ENCODE measurements at regions of chr1 and their contacts with region 1.

Region 1: DNA sequence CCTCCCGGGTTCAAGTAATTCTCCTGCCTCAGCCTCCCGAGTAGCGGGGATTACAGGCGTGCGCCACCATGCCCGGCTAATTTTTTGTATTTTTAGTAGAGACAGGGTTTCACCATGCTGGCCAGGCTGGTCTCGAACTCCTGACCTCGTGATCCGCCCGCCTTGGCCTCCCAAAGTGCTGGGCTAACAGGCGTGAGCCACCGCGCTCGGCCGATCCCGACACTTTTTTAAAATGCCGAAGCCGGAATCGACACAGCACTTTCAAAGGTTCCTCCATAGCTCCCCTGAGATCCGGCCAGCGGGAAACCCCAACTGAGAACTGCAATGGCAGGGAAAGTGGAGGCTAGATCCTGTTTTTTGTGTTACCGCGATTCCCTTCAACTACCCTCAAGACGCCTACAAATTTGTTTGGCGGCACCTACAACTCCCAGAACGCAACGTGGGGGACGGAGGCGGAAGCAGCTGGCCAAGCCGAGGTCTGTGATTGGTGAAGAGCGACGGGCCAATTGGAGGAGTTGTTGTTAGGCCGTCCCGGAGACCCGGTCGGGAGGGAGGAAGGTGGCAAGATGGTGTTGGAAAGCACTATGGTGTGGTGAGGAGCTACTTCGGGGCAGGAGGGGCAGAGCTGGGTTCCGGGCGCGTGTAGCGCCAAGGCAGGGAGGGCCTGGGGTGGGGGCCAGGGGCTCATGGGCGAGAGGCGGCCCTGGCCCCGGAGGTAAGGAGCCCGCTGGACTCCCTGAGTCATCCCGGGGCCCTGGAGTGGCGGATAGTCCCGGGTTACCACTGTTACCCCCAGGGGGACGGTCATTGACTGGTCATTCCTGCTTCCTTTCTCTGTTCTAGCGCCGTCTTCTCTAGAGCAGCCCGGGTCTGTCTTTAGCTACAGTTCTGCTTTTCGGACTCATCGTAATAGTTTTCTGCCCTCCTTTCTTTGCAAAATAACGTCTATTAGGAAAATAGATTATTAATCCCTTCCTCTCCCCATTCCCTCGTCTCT is at the start of gene PSMD4:
- DNase-seq: peak; percentile 88 to 98 (median 92)
- ATAC-seq: peak; percentile 93
- H3K4me3 ChIP-seq: peak within 1 kb of the TSS; percentile 87
- H3K4me3 Mint-ChIP-seq: peak within 1 kb of the TSS; percentile 98
- H3K27ac ChIP-seq: peak within 1 kb of the TSS; percentile 55 to 67
- H3K27ac Mint-ChIP-seq: peak within 1 kb of the TSS; percentile 94
- H3K4me1 ChIP-seq: peaks cover 21% of the 10 kb centered on the region
- H3K4me1 Mint-ChIP-seq: peaks cover 36% of the 10 kb centered on the region
- H3K27me3 ChIP-seq: no peaks in the 10 kb centered on the region
- H3K27me3 Mint-ChIP-seq: peaks cover 4% of the 10 kb centered on the region
- CTCF ChIP-seq: no peak
- total RNA-seq, gene PSMD4: 57.2 TPM

Region 2: DNA sequence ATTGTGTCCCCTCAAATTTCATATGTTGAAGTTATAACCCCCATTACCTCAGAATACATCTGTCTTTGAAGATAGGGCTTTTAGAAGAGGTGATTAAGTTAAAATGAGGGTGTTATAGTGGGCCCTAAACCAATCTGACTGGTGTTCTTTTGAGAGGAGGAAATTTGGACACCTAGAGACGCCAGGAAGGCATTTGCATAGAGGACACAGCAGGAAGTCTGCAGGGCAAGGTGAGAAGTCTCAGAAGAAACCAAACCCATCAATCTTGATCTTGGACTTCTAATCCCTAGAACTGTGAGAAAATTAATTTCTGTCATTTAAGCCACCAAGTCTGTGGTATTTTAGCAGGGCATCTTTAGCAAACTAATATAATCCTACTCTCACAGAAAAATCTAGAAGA is 570.6 kb before region 1 on chr1:
- CTCF ChIA-PET with region 1: no interaction called
- POLR2A ChIA-PET with region 1: no interaction called
- intact Hi-C with region 1: no loop called
- DNase-seq: peak in 3 of 14 experiments; percentile 7 to 29 (median 18)
- ATAC-seq: no peak
- H3K4me3 ChIP-seq: no peak overlapping the region
- H3K4me3 Mint-ChIP-seq: no peak overlapping the region
- H3K27ac ChIP-seq: peak overlapping the region; percentile 22 to 30
- H3K27ac Mint-ChIP-seq: peak overlapping the region; percentile 35
- H3K4me1 ChIP-seq: peaks cover 10% of the 10 kb centered on the region
- H3K4me1 Mint-ChIP-seq: peaks cover 16% of the 10 kb centered on the region
- H3K27me3 ChIP-seq: no peaks in the 10 kb centered on the region
- H3K27me3 Mint-ChIP-seq: no peaks in the 10 kb centered on the region
- CTCF ChIP-seq: no peak

Region 3: DNA sequence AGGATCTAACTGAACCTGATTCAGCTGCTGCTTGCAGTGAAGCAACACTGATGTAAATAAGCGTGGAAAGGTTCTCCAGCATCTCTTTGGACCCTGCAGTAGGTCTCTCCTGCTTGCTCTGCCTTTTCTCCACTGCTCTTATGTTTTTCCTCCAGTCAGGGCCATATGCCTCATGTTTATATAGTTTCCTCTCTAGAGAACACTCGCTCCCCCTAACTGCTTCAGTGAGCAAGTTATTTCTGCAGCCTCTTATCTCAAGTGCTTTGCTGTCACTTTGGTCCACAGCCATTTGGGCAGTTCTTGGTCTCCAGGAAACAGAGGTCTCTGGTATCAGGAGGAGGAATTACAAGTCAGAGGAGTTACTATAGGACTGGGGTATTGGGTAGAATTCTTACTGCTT is 241.0 kb before region 1 on chr1:
- CTCF ChIA-PET with region 1: no interaction called
- POLR2A ChIA-PET with region 1: no interaction called
- intact Hi-C with region 1: loop called in 1 of 2 experiments (anchors 10 kb)
- DNase-seq: no peak
- ATAC-seq: no peak
- H3K4me3 ChIP-seq: no peak overlapping the region
- H3K4me3 Mint-ChIP-seq: peak overlapping the region; percentile 1
- H3K27ac ChIP-seq: no peak overlapping the region
- H3K27ac Mint-ChIP-seq: no peak overlapping the region
- H3K4me1 ChIP-seq: peaks cover 41% of the 10 kb centered on the region
- H3K4me1 Mint-ChIP-seq: peaks cover 51% of the 10 kb centered on the region
- H3K27me3 ChIP-seq: no peaks in the 10 kb centered on the region
- H3K27me3 Mint-ChIP-seq: no peaks in the 10 kb centered on the region
- CTCF ChIP-seq: no peak

Region 4: DNA sequence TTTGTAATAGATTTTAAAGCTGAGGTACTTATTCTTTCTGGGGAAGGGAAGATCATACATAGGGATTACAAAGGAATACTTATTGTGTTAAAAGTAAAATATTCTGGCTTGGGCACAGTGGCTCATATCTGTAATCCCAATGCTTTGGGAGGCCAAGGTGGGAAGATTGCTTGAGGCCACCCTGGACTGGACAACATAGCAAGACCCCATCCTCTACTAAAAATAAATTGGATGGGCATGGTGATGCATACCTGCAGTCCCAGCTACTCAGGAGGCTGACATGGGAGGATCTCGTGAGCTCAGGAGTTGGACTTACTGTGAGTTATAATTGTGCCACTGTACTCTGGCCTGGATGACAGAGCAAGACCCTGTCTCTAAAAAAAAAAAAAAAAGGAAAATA is 156.4 kb before region 1 on chr1:
- CTCF ChIA-PET with region 1: interaction called, 16 read pairs
- POLR2A ChIA-PET with region 1: interaction called, 8 read pairs
- intact Hi-C with region 1: loop called (anchors 1 to 5 kb)
- DNase-seq: no peak
- ATAC-seq: no peak
- H3K4me3 ChIP-seq: no peak overlapping the region
- H3K4me3 Mint-ChIP-seq: no peak overlapping the region
- H3K27ac ChIP-seq: no peak overlapping the region
- H3K27ac Mint-ChIP-seq: no peak overlapping the region
- H3K4me1 ChIP-seq: no peaks in the 10 kb centered on the region
- H3K4me1 Mint-ChIP-seq: no peaks in the 10 kb centered on the region
- H3K27me3 ChIP-seq: no peaks in the 10 kb centered on the region
- H3K27me3 Mint-ChIP-seq: no peaks in the 10 kb centered on the region
- CTCF ChIP-seq: no peak

Region 5: DNA sequence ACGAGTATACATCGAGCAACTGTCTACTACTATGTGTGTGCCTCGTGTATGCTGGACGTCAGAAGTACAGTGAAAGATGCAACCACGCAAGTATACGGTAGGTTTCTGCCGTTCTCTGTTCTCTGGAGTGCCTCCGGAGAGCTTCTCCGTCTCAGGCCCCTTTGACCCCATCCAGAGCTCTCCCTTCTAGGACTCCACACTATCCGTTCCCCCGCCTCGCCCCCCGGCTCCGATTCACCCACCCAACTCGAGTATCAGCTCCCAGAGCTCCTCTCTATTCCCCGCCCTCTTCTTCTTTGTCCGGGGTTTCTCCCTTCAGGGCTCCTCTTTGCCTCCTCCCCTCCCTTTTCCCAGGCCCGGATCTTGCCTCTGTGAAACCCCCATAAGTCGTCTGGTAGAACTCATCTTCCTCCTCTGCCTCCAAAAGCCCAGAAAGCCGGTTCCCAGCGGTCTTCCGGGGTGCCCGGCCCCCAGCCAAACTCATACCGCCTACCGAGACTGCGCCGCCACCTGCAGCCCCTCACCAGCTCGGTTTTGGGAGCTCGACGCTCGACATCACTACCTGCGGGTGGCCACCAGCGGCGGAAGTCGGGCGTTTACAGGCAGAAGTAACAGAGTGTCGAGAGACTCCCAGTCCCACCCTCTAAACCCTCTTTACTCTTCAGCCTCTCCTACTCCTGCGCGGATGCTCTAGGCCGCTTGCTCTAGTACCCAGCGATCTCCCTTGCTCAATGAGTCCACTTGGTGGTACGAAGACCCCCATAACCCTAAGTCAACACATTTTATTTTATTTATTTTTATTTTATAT is 64.7 kb before region 1 on chr1 and contains the start of gene VPS72:
- CTCF ChIA-PET with region 1: interaction called, 6 read pairs
- POLR2A ChIA-PET with region 1: interaction called, 10 read pairs
- intact Hi-C with region 1: no loop called
- DNase-seq: peak; percentile 70 to 93 (median 81)
- ATAC-seq: peak; percentile 90
- H3K4me3 ChIP-seq: peak within 1 kb of the TSS; percentile 75
- H3K4me3 Mint-ChIP-seq: peak within 1 kb of the TSS; percentile 97
- H3K27ac ChIP-seq: peak within 1 kb of the TSS; percentile 58 to 73
- H3K27ac Mint-ChIP-seq: peak within 1 kb of the TSS; percentile 90
- H3K4me1 ChIP-seq: peaks cover 24% of the 10 kb centered on the region
- H3K4me1 Mint-ChIP-seq: peaks cover 42% of the 10 kb centered on the region
- H3K27me3 ChIP-seq: no peaks in the 10 kb centered on the region
- H3K27me3 Mint-ChIP-seq: no peaks in the 10 kb centered on the region
- CTCF ChIP-seq: no peak
- total RNA-seq, gene VPS72: 12.7 to 17.2 TPM

Region 6: DNA sequence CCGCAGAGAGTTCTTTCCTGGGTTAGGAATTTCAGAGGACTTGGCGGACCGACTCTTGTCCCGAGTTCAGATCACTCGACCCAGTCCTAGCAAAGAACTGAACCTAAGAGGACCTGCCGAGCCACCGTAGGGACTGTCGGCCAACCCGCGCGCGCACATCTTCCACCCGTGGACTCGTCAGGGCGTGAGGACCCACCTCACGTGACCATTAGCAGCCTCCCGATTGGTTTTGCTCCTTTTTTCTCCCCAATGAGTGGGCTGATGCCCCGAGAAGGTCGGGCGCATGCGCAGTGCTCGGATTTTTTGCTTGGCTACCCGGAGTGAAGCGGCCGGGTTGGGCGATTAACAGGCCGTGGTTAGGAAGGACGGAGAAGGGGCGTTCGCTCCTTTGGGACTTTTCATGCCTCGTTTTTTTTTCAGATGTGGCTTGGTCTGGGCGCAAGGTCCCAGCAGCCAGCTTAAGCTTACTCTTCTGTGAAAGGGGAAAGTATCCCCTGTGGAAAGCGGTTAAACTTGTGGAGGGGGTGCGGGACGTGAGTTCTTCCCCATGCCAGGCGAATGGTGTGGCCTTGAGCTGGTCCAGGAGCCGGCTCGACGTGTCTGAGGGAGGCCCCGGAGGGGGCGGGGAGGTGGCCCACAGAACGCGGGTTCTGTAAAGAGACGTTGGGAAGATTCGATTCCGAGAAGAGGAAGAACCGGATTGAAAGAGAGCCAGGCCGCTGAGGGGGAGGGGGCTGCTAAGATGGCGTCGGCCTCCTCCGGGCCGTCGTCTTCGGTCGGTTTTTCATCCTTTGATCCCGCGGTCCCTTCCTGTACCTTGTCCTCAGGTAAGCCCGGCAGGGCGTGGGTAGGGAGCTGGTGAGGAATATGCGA is 56.0 kb before region 1 on chr1 and contains the start of gene PIP5K1A:
- CTCF ChIA-PET with region 1: interaction called, 7 read pairs
- POLR2A ChIA-PET with region 1: no interaction called
- intact Hi-C with region 1: loop called (anchors 1 kb)
- DNase-seq: peak; percentile 96 to 99 (median 99)
- ATAC-seq: peak; percentile 95
- H3K4me3 ChIP-seq: peak within 1 kb of the TSS; percentile 93
- H3K4me3 Mint-ChIP-seq: peak within 1 kb of the TSS; percentile 98
- H3K27ac ChIP-seq: peak within 1 kb of the TSS; percentile 69 to 77
- H3K27ac Mint-ChIP-seq: peak within 1 kb of the TSS; percentile 96
- H3K4me1 ChIP-seq: peaks cover 43% of the 10 kb centered on the region
- H3K4me1 Mint-ChIP-seq: peaks cover 48% of the 10 kb centered on the region
- H3K27me3 ChIP-seq: no peaks in the 10 kb centered on the region
- H3K27me3 Mint-ChIP-seq: peaks cover 4% of the 10 kb centered on the region
- CTCF ChIP-seq: no peak
- total RNA-seq, gene PIP5K1A: 41.7 to 44.7 TPM

Region 7: DNA sequence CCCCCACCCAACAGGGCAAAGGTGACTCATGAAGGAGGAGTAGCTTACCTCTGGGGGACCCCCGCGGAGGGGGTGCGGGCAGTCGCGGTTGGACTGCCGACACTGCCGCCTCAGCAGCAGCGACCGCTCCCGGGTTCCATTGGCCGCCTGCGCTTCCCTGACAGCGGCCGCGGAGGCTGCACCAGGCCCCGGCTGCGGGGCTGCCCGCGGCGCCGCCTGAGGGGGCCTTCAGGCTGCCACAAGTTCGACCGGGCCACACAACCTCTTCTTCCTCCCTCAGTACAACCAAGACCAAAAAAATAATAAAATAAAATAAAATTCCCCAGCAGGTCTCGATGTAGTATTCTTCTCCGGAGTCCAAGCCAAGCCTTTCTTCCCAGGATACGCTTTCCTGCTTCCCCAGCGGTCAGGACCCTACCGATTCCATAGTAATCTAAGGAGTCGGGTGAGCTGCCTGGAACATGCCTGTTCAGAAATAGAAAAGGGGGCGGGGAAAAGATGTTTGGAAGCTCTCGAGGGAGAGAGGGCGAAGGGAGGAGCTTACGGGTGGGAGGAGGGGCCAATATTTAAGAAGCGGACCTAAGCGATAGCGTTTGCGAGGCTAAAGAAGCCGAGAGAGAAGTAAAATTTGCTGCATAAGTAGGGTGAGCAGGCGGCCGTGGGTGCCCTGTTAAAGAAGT is 72.8 kb after region 1 on chr1 and contains the start of gene PI4KB:
- CTCF ChIA-PET with region 1: no interaction called
- POLR2A ChIA-PET with region 1: interaction called, 5 read pairs
- intact Hi-C with region 1: loop called in 1 of 2 experiments (anchors 1 kb)
- DNase-seq: peak; percentile 76 to 97 (median 85)
- ATAC-seq: peak; percentile 94
- H3K4me3 ChIP-seq: peak within 1 kb of the TSS; percentile 75
- H3K4me3 Mint-ChIP-seq: peak within 1 kb of the TSS; percentile 95
- H3K27ac ChIP-seq: peak within 1 kb of the TSS; percentile 84 to 96
- H3K27ac Mint-ChIP-seq: peak within 1 kb of the TSS; percentile 93
- H3K4me1 ChIP-seq: peaks cover 35% of the 10 kb centered on the region
- H3K4me1 Mint-ChIP-seq: peaks cover 33% of the 10 kb centered on the region
- H3K27me3 ChIP-seq: no peaks in the 10 kb centered on the region
- H3K27me3 Mint-ChIP-seq: no peaks in the 10 kb centered on the region
- CTCF ChIP-seq: no peak
- total RNA-seq, gene PI4KB: 50.2 to 51.0 TPM

Region 8: DNA sequence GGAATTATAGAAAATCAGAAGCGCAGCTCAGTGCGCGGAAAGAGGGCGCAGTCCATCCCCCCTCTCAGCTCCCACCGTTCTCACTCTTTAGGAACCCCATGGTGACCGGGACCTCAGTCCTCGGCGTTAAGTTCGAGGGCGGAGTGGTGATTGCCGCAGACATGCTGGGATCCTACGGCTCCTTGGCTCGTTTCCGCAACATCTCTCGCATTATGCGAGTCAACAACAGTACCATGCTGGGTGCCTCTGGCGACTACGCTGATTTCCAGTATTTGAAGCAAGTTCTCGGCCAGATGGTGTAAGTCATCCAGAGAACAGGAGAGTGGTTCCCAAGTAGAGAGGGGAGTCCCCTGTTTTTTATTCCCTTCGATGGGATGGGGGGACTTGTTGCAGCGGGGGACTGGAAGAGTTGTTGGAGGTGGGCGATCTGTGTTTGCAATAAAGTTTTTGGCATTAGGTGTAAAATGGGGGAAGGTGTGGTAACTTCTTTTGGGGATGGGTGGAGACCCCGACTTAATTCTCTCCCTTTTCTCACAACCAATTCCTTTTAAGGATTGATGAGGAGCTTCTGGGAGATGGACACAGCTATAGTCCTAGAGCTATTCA is 145.5 kb after region 1 on chr1:
- CTCF ChIA-PET with region 1: interaction called, 5 read pairs
- POLR2A ChIA-PET with region 1: interaction called, 3 read pairs
- intact Hi-C with region 1: loop called in 1 of 2 experiments (anchors 2 kb)
- DNase-seq: peak in 4 of 14 experiments; percentile 15 to 49 (median 39)
- ATAC-seq: peak; percentile 1
- H3K4me3 ChIP-seq: peak overlapping the region; percentile 99
- H3K4me3 Mint-ChIP-seq: peak overlapping the region; percentile 93
- H3K27ac ChIP-seq: peak overlapping the region; percentile 91 to 97
- H3K27ac Mint-ChIP-seq: peak overlapping the region; percentile 93
- H3K4me1 ChIP-seq: peaks cover 29% of the 10 kb centered on the region
- H3K4me1 Mint-ChIP-seq: peaks cover 27% of the 10 kb centered on the region
- H3K27me3 ChIP-seq: no peaks in the 10 kb centered on the region
- H3K27me3 Mint-ChIP-seq: no peaks in the 10 kb centered on the region
- CTCF ChIP-seq: no peak